B cell (primary cell): ENCODE measurements at regions of chr1 and their contacts with region 1.

Region 1: DNA sequence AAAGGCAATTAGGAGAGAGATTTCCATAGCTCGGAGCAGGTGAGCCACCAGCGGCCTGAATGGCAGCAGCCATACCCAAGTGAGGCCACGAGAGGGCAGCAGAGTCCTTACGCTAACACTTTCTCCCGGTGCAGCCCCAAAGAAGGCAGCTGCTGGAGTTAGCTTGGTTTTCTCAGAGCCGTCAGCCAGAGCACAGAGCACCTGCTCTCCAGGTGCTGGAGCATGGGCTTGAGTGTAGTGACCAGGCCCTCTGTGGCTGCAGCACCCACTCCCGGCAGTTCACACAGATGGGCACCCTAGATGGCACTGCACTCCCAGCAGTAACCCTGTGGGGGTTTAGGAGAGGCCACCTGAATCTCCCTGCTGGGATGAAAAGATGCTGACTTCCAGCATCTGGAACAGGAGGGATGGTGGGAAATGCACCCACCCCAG is 45.8 kb downstream of the TMCC2 start:
- DNase-seq: peak; percentile 90
- ATAC-seq: peak; percentile 83
- H3K4me3 ChIP-seq: peak overlapping the region in 3 of 5 experiments; percentile 5 to 27 (median 23)
- H3K4me3 Mint-ChIP-seq: peak overlapping the region; percentile 78
- H3K27ac ChIP-seq: peak overlapping the region in 1 of 2 donors; percentile 37
- H3K27ac Mint-ChIP-seq: peak overlapping the region; percentile 94
- H3K4me1 ChIP-seq: peaks cover 51 to 54% of the 10 kb centered on the region in 2 donors
- H3K4me1 Mint-ChIP-seq: peaks cover 46% of the 10 kb centered on the region
- H3K27me3 ChIP-seq: no peaks in the 10 kb centered on the region
- H3K27me3 Mint-ChIP-seq: no peaks in the 10 kb centered on the region
- CTCF ChIP-seq: peak; percentile 97

Region 2: DNA sequence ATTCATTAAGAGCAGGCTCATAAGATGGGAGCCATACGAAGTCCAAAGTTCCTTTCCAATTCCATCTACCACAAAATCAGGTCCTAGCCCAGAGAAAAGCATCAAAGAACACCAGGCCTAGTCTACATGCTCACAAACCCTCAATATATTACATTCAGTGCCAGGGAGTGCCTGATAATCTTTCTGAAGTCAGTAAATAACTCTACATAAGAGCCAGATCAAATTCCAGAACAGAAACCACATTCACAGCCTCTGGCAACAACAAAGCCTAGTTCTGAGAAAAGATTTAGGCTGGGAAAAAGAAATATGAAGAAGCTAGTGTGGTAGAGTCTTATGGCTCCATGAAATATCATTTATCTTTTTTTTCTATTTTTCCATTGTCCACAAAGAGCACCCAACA is 111.3 kb before region 1 on chr1:
- CTCF ChIA-PET with region 1: no interaction called
- POLR2A ChIA-PET with region 1: no interaction called
- intact Hi-C with region 1: no loop called
- DNase-seq: no peak
- ATAC-seq: no peak
- H3K4me3 ChIP-seq: no peak overlapping the region
- H3K4me3 Mint-ChIP-seq: no peak overlapping the region
- H3K27ac ChIP-seq: no peak overlapping the region
- H3K27ac Mint-ChIP-seq: no peak overlapping the region
- H3K4me1 ChIP-seq: no peaks in the 10 kb centered on the region
- H3K4me1 Mint-ChIP-seq: no peaks in the 10 kb centered on the region
- H3K27me3 ChIP-seq: no peaks in the 10 kb centered on the region
- H3K27me3 Mint-ChIP-seq: no peaks in the 10 kb centered on the region
- CTCF ChIP-seq: no peak

Region 3: GRCh38 chr1:205227584-205228006 is 46.0 kb before region 1 on chr1 and contains the start of gene TMCC2:
- CTCF ChIA-PET with region 1: interaction called, 19 read pairs
- POLR2A ChIA-PET with region 1: interaction called, 7 read pairs
- intact Hi-C with region 1: no loop called
- DNase-seq: peak; percentile 83
- ATAC-seq: peak; percentile 87
- H3K4me3 ChIP-seq: peak within 1 kb of the TSS; percentile 21 to 73 (median 59)
- H3K4me3 Mint-ChIP-seq: peak within 1 kb of the TSS; percentile 97
- H3K27ac ChIP-seq: no peak within 1 kb of the TSS
- H3K27ac Mint-ChIP-seq: peak within 1 kb of the TSS; percentile 77
- H3K4me1 ChIP-seq: peaks cover 17 to 33% of the 10 kb centered on the region in 2 donors
- H3K4me1 Mint-ChIP-seq: peaks cover 30% of the 10 kb centered on the region
- H3K27me3 ChIP-seq: peaks cover 0 to 14% (median 2%) of the 10 kb centered on the region in 4 experiments
- H3K27me3 Mint-ChIP-seq: peaks cover 21% of the 10 kb centered on the region
- CTCF ChIP-seq: no peak
- total RNA-seq, gene TMCC2: 3.3 and 4.0 TPM in 2 replicates

Region 4: DNA sequence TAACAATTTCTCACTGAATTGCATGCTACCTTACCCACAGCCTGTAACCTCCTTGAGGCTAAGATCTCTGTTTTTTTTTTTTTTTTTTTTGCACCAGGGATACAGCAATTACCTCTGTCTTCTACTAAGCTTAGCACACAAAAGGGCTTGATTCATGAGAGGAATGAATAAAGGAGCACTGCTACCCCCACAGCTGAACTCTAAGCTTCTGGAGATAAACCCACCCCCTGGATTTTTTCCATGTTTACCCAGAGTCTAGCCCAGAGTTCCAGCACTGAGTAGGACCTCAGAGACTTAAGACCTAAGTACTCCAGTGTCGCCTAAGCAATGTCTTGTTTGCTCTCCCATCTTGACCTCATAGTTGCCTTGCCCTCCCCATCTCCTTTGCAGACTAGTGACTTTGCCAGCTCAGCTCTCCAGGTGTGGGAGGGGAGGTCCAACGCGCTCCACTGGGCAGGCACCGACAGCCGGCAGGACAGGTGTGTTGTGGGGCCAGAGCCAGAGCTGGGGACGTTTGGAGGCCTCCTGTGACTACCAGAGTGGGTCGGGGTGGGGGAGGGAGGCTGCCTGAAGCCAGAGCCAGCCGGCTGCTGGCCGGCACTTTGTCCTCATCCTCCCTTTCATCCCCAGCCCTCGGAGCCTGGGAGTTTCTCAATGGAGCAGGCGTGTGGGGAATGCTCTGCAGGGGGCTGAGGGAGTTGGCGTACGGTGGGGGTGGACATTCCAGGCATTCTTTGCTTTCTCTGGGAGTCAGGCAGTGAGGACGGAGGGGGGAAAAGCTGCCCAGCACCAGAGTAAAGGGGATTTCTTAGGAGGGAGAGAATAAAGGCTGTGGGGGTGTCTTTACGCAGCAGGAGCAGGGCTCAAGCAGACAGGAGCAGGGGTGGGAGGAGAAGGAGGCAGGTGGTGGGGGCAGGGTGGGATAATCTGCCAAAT is 27.6 kb after region 1 on chr1:
- CTCF ChIA-PET with region 1: interaction called, 210 read pairs
- POLR2A ChIA-PET with region 1: interaction called, 55 read pairs
- intact Hi-C with region 1: no loop called
- DNase-seq: peak; percentile 61
- ATAC-seq: peak; percentile 70
- H3K4me3 ChIP-seq: no peak overlapping the region
- H3K4me3 Mint-ChIP-seq: peak overlapping the region; percentile 55
- H3K27ac ChIP-seq: peak overlapping the region; percentile 28 to 75
- H3K27ac Mint-ChIP-seq: peak overlapping the region; percentile 86
- H3K4me1 ChIP-seq: peaks cover 32 to 53% of the 10 kb centered on the region in 2 donors
- H3K4me1 Mint-ChIP-seq: peaks cover 64% of the 10 kb centered on the region
- H3K27me3 ChIP-seq: no peaks in the 10 kb centered on the region
- H3K27me3 Mint-ChIP-seq: no peaks in the 10 kb centered on the region
- CTCF ChIP-seq: no peak

Region 5: GRCh38 chr1:205313563-205314308 is 40.2 kb after region 1 on chr1:
- CTCF ChIA-PET with region 1: interaction called, 2,421 read pairs
- POLR2A ChIA-PET with region 1: interaction called, 194 read pairs
- intact Hi-C with region 1: no loop called
- DNase-seq: peak; percentile 90
- ATAC-seq: peak; percentile 83
- H3K4me3 ChIP-seq: peak overlapping the region; percentile 39 to 74 (median 56)
- H3K4me3 Mint-ChIP-seq: peak overlapping the region; percentile 94
- H3K27ac ChIP-seq: peak overlapping the region; percentile 82 to 98
- H3K27ac Mint-ChIP-seq: peak overlapping the region; percentile 98
- H3K4me1 ChIP-seq: peaks cover 88 to 91% of the 10 kb centered on the region in 2 donors
- H3K4me1 Mint-ChIP-seq: peaks cover 93% of the 10 kb centered on the region
- H3K27me3 ChIP-seq: no peaks in the 10 kb centered on the region
- H3K27me3 Mint-ChIP-seq: no peaks in the 10 kb centered on the region
- CTCF ChIP-seq: no peak

Region 6: GRCh38 chr1:205344066-205344928 is 70.7 kb after region 1 on chr1:
- CTCF ChIA-PET with region 1: interaction called, 2,421 read pairs
- POLR2A ChIA-PET with region 1: no interaction called
- intact Hi-C with region 1: no loop called
- DNase-seq: peak; percentile 69
- ATAC-seq: peak; percentile 61
- H3K4me3 ChIP-seq: peak overlapping the region in 4 of 5 experiments; percentile 37 to 51 (median 50)
- H3K4me3 Mint-ChIP-seq: peak overlapping the region; percentile 84
- H3K27ac ChIP-seq: no peak overlapping the region
- H3K27ac Mint-ChIP-seq: peak overlapping the region; percentile 32
- H3K4me1 ChIP-seq: peaks cover 34 to 42% of the 10 kb centered on the region in 2 donors
- H3K4me1 Mint-ChIP-seq: peaks cover 48% of the 10 kb centered on the region
- H3K27me3 ChIP-seq: peaks cover 0 to 20% (median 10%) of the 10 kb centered on the region in 4 experiments
- H3K27me3 Mint-ChIP-seq: peaks cover 8% of the 10 kb centered on the region
- CTCF ChIP-seq: no peak